Motor neuron (in vitro differentiated cells): ENCODE measurements at regions of chr3 and their contacts with region 1.

Region 1: DNA sequence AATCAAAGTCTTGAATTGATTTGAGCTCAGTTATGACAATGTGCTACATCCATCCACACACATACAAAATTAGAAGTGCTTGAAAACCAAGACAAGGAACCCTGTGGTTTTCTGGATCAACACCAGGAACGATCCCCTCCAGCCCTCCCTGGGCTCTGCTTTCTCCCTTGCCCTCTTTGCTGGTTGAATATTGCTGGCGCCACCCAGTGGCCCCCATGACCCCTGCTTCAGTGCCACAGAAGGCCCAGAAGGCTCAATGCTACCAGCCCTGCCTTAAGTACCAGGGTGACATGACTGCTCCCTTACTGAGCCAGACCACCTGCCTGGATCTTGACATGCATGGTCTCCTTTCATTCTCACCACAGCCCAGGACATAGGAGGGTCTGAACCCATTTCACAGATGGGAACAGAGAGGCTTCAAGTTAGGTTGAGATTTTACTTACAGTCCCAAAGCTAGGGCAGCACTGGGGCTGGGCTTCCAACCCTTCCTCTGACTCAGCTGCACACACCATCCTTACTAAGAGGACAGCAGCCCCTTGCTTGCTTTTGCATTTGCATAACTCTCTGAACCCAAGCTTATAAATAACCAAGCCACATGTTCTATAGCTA is 15.0 kb downstream of the IL12A start:
- ATAC-seq: peak in 4 of 8 experiments; percentile 63 to 84 (median 74)
- H3K4me3 ChIP-seq: no peak overlapping the region
- H3K27ac ChIP-seq: no peak overlapping the region
- H3K4me1 ChIP-seq: no peaks in the 10 kb centered on the region

Region 2: DNA sequence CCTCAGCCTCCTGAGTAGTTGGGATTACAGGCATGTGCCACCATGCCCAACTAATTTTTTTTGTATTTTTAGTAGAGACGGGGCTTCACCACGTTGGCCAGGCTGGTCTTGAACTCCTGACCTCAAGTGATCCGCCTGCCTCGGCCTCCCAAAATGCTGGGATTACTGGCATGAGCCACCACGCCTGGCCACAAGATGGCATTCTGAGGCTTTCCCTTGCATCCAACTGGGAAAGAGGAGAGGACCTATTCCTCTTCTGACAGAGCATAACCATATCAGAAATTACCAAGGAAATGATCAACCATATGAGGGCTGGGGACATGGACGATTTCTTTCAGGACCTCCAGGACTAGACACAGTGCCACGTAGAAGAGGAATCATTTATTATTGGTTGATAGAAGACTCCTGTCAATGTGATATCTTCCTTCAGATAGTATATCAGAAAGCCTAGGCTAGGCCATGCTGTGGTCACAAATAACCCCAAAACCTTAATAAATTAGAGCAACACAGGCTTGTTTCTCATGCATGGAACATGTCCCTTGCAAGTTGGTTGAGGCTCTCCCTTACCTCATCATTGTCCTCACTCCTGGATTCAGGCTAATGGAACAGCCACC is 387.3 kb before region 1 on chr3:
- in situ Hi-C with region 1: loop called in 1 of 9 experiments (anchors 25 kb)
- ATAC-seq: peak in 4 of 8 experiments; percentile 50 to 95 (median 84)
- H3K4me3 ChIP-seq: no peak overlapping the region
- H3K27ac ChIP-seq: no peak overlapping the region
- H3K4me1 ChIP-seq: peaks cover 0 to 14% of the 10 kb centered on the region in 2 donors

Region 3: GRCh38 chr3:159828542-159828943 is 175.1 kb before region 1 on chr3:
- in situ Hi-C with region 1: loop called in 2 of 9 experiments (anchors 10 to 25 kb)
- ATAC-seq: peak; percentile 20 to 85 (median 76)
- H3K4me3 ChIP-seq: no peak overlapping the region
- H3K27ac ChIP-seq: no peak overlapping the region
- H3K4me1 ChIP-seq: peaks cover 0 to 5% of the 10 kb centered on the region in 2 donors

Region 4: GRCh38 chr3:159852821-159853505 is 150.7 kb before region 1 on chr3:
- in situ Hi-C with region 1: loop called in 2 of 9 experiments (anchors 25 kb)
- ATAC-seq: peak; percentile 31 to 77 (median 68)
- H3K4me3 ChIP-seq: peak overlapping the region in 4 of 5 donors; percentile 4 to 26 (median 21)
- H3K27ac ChIP-seq: peak overlapping the region; percentile 65 to 83
- H3K4me1 ChIP-seq: peaks cover 62 to 88% of the 10 kb centered on the region in 2 donors

Region 5: GRCh38 chr3:159884661-159885402 is 118.8 kb before region 1 on chr3:
- in situ Hi-C with region 1: loop called in 3 of 9 experiments (anchors 10 to 25 kb)
- ATAC-seq: peak in 3 of 8 experiments; percentile 45 to 54 (median 49)
- H3K4me3 ChIP-seq: no peak overlapping the region
- H3K27ac ChIP-seq: no peak overlapping the region
- H3K4me1 ChIP-seq: peaks cover 0 to 25% of the 10 kb centered on the region in 2 donors

Region 6: DNA sequence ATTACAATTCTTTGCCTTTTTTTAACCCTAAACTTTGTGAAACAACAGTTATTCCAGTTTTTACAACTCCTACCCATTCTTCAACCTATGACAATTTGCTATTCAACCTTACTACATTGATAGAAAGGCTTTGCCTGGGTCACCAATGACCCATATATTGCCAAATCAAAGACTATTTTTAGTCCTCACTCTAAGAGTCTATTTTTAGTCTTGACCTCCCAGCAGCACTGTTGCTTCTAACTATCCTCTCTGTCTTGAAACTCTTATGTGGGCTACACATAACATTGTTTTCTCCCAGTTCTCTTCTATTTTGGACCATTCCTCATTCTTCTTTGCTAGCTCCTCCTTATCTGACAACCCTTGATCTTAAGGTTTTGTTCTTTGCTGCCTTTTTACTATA is 293.0 kb after region 1 on chr3:
- in situ Hi-C with region 1: no loop called
- ATAC-seq: no peak
- H3K4me3 ChIP-seq: no peak overlapping the region
- H3K27ac ChIP-seq: no peak overlapping the region
- H3K4me1 ChIP-seq: no peaks in the 10 kb centered on the region